ENCODE measurements at regions of chr13 and their contacts with region 1.

Region 1: DNA sequence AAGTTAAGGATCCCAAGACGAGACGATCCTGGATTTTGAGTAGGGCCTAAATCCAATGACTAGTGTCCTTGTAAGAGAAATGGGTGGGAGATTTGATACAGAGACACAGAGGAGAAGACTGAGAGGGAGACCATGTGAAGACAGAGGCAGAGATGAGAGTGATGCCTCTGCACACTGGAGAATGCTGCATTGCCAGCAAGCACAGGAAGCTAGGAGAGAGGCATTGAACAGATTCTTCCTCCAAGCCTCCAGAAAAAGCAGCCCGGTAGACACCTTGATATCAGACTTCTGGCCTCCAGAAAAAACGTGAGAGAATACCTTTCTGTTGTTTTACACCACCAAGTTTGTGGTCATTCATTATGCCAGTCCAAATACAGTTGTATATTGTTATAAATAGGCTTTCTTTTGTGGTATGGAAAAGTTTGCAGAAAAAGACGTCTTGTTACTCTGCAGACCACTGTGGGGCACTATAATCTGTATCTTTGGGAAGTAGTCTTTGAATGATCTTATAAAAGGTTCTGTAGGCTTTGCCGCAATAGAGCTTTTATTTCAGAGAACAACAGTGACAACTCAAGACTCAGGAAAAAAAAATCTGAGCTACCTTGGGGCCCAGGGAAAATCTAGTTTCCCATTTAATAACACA is 17.9 kb upstream of the RFC3 start:
- DNase-seq: no peak
- ATAC-seq: peak in 2 of 4 donors; percentile 41 to 54
- H3K4me3 ChIP-seq: peak overlapping the region; percentile 16
- H3K27ac ChIP-seq: no peak overlapping the region
- H3K4me1 ChIP-seq: peaks cover 8% of the 10 kb centered on the region
- H3K27me3 ChIP-seq: no peaks in the 10 kb centered on the region
- CTCF ChIP-seq: peak; percentile 42

Region 2: GRCh38 chr13:33228648-33229445 is 571.2 kb before region 1 on chr13:
- intact Hi-C with region 1: no loop called
- DNase-seq: no peak
- ATAC-seq: peak; percentile 58 to 90 (median 70)
- H3K4me3 ChIP-seq: no peak overlapping the region
- H3K27ac ChIP-seq: no peak overlapping the region
- H3K4me1 ChIP-seq: peaks cover 14% of the 10 kb centered on the region
- H3K27me3 ChIP-seq: no peaks in the 10 kb centered on the region
- CTCF ChIP-seq: peak; percentile 94

Region 3: DNA sequence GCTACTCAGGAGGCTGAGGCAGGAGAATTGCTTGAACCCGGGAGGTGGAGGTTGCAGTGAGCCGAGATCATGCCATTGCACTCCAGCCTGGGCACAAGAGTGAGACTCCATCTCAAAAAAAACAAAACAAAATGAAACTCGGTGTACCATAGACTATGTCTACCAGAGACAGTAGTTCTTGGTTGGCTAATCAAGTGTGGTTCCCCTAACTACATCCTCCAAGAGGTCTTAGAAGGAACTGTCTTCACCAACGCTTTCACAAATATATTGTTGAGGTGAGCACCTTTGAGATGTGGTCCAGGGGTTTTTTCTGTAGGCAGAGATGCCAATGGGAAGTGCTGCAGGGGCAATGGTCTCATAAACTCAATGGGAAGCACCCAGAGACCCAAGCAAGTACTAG is 65.9 kb after region 1 on chr13:
- intact Hi-C with region 1: no loop called
- DNase-seq: no peak
- ATAC-seq: no peak
- H3K4me3 ChIP-seq: no peak overlapping the region
- H3K27ac ChIP-seq: no peak overlapping the region
- H3K4me1 ChIP-seq: peaks cover 4% of the 10 kb centered on the region
- H3K27me3 ChIP-seq: no peaks in the 10 kb centered on the region
- CTCF ChIP-seq: no peak

Region 4: DNA sequence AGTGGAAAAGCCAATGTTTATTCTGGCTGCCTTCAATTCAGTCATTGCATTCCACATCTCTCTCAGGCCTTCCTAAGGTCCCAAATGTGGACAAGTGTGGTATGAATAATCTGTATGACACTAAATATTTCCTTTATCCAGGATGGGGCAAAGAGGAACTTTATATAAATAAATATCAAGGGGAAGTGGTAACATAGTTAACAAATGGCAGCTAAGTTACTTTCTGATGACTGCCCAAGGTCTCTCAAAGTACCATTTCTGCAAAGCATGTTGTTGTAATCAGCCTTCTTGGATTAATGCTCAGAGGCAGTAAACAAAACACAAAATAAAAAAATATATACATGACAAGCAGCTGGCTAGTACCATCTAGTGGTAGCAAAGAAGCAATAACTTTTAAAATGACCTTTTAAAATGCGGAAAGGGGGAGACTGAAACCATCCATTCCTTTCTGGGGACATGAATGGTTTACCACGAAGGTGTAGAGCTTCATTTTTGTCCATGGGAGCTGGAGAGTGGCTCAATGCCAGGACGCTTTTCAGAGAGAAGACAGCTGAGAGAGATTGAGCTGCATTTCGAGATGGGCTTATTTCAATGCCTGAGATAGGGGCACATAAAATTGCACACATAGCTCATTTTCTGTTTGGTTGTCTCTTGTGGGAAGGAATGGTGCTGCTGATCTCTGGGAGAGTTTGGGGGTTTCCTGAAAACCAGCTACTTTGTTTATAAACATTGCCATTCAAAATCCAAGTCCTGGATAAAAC is 277.1 kb after region 1 on chr13:
- intact Hi-C with region 1: loop called in 1 of 2 experiments (anchors 2 kb)
- DNase-seq: no peak
- ATAC-seq: no peak
- H3K4me3 ChIP-seq: no peak overlapping the region
- H3K27ac ChIP-seq: no peak overlapping the region
- H3K4me1 ChIP-seq: no peaks in the 10 kb centered on the region
- H3K27me3 ChIP-seq: no peaks in the 10 kb centered on the region
- CTCF ChIP-seq: peak; percentile 44

Measured in psoas muscle (tissue), 8 donors.